A673 (cell line): ENCODE measurements at regions of chr2 and their contacts with region 1.

Region 1: DNA sequence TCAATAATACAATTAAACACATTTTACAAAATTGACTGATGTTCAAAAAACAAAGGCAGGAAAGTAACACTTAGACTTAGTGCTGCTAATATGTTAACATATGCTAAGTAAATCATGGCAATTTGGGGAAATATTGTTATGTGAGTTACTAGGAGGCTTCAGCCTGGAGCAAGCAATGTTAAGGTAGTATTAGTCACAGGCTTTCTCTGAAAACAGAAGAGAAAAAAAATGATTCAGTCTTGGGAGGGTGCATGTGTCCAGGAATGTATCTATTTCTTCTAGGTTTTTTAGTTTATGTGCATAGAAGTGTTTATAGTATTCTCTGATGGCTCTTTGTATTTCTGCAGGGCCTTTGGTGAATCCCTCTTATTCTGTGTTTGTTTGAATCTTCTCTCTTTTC is 345.8 kb upstream of the TFPI start:
- DNase-seq: no peak
- H3K4me3 ChIP-seq: no peak overlapping the region
- H3K27ac ChIP-seq: no peak overlapping the region
- H3K4me1 ChIP-seq: no peaks in the 10 kb centered on the region
- H3K27me3 ChIP-seq: no peaks in the 10 kb centered on the region
- CTCF ChIP-seq: no peak

Region 2: DNA sequence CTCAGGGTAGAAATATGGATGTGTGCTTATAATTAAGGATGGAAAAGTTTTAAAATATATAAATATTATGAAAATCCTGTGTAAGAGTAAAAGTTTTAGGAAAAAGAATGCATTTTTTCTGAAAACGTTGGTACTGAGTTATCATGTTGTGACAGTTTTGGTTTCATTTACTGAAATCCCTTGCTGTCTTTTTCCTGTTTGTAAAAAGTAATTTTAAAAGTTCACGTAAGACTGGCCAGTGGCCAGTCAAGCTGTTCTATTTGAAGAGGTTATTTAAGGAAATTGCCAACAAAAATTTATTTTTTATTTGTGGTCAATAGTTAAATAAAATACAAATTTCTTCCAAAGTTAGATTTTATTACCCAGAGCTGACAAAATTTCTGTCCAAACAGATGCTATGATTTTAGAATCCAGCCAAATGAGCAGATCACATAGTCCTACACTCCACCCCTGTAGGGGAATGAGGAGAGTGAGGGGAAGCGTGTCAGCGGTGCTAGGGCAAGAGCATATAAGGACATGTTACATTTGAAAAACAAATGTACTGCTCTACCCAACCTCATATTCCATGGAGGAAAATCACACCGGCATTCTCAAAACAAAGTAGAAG is 48.0 kb before region 1 on chr2:
- CTCF ChIA-PET with region 1: no interaction called
- POLR2A ChIA-PET with region 1: no interaction called
- intact Hi-C with region 1: no loop called
- DNase-seq: no peak
- H3K4me3 ChIP-seq: no peak overlapping the region
- H3K27ac ChIP-seq: no peak overlapping the region
- H3K4me1 ChIP-seq: no peaks in the 10 kb centered on the region
- H3K27me3 ChIP-seq: no peaks in the 10 kb centered on the region
- CTCF ChIP-seq: no peak

Region 3: GRCh38 chr2:187971893-187972292 is 71.9 kb after region 1 on chr2:
- CTCF ChIA-PET with region 1: no interaction called
- POLR2A ChIA-PET with region 1: interaction called, 10 read pairs
- intact Hi-C with region 1: no loop called
- DNase-seq: no peak
- H3K4me3 ChIP-seq: no peak overlapping the region
- H3K27ac ChIP-seq: no peak overlapping the region
- H3K4me1 ChIP-seq: no peaks in the 10 kb centered on the region
- H3K27me3 ChIP-seq: no peaks in the 10 kb centered on the region
- CTCF ChIP-seq: 0 out of 2 replicates have a peak, but pooled peaks have one; percentile 9